HEK293T (cell line): ENCODE measurements at regions of chr17 and their contacts with region 1.

Region 1: DNA sequence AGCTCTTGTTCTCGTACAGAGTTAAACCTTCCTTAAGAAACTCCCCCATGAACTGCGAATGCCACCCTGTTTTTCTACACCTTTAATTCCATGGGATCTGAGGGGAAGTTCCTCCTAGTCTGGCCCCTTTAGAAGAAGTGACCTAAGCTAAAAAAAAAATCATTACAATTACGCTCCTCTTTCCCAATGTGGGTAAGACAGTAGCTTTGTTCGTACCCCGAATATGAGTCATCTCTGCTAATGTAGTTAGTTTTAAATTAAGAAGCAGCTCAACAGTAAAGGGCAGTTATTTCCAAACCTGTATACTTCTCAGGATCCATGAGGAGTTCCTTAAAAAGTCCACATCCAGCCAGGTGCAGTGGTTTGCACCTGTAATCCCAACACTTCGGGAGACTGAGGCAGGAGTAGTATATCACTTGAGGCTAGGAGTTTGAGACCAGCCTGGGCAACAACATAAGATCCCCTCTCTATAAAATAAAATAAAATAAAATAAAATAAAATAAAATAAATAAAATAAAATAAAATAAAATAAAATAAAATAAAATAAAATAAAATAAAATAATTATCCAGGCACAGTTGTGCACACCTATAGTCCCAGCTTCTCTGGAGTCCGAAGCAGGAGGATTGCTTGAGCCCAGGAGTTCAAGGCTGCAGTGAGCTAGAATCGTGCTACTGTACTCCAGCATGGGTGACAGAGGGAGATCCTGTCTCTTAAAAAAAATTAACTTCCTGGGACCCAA is 26.1 kb downstream of the RCVRN start:
- DNase-seq: no peak

Region 2: DNA sequence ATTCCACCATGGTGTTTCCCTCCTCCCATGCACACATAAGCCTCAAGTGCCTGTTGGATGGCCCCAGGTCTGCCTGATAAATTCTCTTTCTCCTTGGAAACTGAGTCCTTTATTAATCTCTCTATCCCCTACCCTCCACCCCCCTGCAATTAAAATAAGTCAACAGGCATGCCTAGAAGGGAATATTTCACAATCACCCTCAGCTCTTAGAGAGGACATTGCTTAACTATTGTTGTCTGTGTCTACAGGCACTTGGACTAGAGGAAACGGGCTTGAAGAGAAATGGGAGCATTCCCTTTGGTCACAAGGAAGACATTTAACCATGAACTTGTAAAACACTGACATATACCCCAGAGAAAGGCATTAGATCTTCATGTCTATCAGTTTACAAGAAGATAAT is 13.4 kb before region 1 on chr17:
- CTCF ChIA-PET with region 1: no interaction called
- POLR2A ChIA-PET with region 1: no interaction called
- DNase-seq: no peak

Region 3: DNA sequence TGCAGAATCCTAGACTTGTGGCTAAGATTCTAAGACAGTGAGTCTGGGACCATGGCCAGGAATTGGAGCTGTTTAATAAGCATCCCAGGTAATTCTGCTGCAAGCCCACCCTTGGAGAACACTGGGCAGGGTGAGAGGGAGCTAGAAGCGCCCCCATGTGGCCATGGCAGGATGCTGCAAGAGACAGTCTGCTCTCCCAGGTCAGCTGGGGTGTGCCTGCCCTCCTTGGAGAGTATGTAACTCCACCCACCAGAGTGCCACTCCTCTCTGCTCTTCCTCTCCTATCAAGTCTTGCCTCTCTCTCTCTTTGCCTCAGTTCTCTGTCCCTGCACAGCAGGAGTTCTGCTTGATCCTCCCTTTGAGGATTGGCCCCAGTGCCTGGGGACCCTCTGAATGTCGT is 11.2 kb after region 1 on chr17:
- CTCF ChIA-PET with region 1: interaction called, 10 read pairs
- POLR2A ChIA-PET with region 1: no interaction called
- DNase-seq: peak; percentile 69